Right ventricle myocardium superior (tissue), 1 donor: ENCODE measurements at regions of chr1 and their contacts with region 1.

Region 1: GRCh38 chr1:17661546-17662157 is 93.5 kb upstream of the ACTL8 start:
- DNase-seq: peak; percentile 67
- ATAC-seq: peak; percentile 56

Region 2: DNA sequence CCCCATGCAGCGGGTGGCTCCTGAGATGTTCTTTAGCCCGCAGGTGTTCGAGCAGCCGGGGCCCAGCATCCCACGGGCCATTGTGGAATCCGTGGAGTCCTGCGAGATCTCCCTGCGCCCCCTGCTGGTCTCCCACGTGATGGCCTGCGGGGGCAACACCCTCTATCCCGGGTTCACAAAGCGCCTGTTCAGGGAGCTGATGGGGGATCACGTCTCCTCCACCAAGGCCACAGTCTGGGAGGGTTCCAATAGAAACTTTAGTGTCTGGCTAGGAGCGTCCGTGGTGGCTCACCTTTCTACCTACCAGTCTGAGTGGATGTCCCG is 164.5 kb after region 1 on chr1:
- intact Hi-C with region 1: loop called (anchors 10 kb)
- DNase-seq: peak; percentile 71
- ATAC-seq: peak; percentile 72